Ascending aorta (tissue), 2 donors: ENCODE measurements at regions of chr9 and their contacts with region 1.

Region 1: GRCh38 chr9:117411548-117411947 is 3.3 kb downstream of the ASTN2 start:
- DNase-seq: peak in 1 of 2 donors; percentile 64
- H3K4me3 ChIP-seq: no peak overlapping the region
- H3K27ac ChIP-seq: no peak overlapping the region
- H3K4me1 ChIP-seq: peaks cover 0 to 10% of the 10 kb centered on the region in 2 donors
- H3K27me3 ChIP-seq: no peaks in the 10 kb centered on the region
- CTCF ChIP-seq: peak; percentile 32 to 58 (median 37)

Region 2: DNA sequence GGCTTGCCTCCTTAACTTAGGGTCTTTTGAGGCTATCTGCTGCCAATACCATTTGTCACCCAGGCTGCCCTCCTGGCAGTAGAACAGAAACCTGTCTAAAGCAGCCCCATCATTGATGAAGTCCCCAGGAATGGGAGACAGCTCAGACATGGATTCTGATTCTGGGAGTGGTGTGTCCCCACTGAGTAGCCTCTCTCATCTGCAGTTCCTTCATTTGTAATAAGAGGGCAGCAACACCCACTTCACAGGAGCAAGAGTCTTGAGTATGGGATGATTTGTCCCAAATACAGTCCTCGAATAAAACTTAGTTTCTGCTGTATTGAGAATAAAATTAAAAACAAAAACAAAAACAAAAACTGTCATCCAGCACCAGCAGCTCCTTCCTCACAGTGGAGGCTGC is 164.3 kb before region 1 on chr9:
- intact Hi-C with region 1: loop called (anchors 10 kb)
- DNase-seq: no peak
- H3K4me3 ChIP-seq: no peak overlapping the region
- H3K27ac ChIP-seq: no peak overlapping the region
- H3K4me1 ChIP-seq: no peaks in the 10 kb centered on the region
- H3K27me3 ChIP-seq: no peaks in the 10 kb centered on the region
- CTCF ChIP-seq: peak in 2 of 3 experiments; percentile 27 to 42